Caco-2 (cell line): ENCODE measurements at regions of chr6 and their contacts with region 1.

Region 1: DNA sequence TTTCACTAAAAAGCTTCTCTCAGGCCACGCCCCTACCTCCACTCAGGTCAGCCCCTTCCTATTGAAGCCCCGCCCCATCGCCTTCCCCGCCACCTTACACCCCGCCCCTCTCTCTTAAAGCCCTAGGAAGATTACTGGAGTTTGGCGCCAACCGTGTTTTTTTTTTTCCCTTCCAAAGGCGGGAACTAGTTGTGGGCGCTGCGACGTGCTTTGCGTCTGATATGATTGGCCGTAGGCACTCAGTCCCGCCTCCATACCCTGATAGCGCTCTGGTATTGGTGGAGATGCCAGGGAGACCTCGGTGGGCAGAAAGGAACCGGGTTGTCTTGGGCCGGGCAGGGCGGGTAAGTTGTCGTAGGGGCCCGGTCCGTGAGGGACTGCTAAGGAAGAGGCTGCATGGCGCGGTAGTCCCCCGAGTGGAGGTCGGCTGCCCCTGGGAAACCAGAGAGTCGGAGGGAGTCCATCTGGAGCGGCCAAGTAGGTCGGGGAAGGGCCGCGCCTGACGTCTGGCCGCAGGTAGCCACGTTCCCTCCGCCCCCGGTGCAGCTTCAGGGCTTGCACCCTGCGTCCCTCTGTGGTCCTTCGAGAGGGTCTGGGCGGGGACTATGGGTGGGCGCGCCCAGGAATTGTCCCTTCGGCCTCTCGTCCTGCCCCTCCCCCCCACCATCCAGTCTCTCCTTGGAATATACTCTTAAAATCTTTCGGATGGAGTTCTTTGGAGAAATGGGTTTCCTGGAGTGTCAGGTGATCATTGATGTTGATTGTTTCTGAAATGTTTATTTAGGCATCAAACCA is at the start of gene CASP8AP2:
- DNase-seq: peak; percentile 94
- H3K4me3 ChIP-seq: peak within 1 kb of the TSS; percentile 64
- H3K4me3 Mint-ChIP-seq: peak within 1 kb of the TSS; percentile 99
- H3K27ac Mint-ChIP-seq: peak within 1 kb of the TSS; percentile 98
- H3K4me1 ChIP-seq: no peaks in the 10 kb centered on the region
- H3K4me1 Mint-ChIP-seq: no peaks in the 10 kb centered on the region
- H3K27me3 ChIP-seq: no peaks in the 10 kb centered on the region
- H3K27me3 Mint-ChIP-seq: no peaks in the 10 kb centered on the region
- CTCF ChIP-seq: no peak
- total RNA-seq, gene CASP8AP2: 19.3 and 23.3 TPM in 2 replicates

Region 2: DNA sequence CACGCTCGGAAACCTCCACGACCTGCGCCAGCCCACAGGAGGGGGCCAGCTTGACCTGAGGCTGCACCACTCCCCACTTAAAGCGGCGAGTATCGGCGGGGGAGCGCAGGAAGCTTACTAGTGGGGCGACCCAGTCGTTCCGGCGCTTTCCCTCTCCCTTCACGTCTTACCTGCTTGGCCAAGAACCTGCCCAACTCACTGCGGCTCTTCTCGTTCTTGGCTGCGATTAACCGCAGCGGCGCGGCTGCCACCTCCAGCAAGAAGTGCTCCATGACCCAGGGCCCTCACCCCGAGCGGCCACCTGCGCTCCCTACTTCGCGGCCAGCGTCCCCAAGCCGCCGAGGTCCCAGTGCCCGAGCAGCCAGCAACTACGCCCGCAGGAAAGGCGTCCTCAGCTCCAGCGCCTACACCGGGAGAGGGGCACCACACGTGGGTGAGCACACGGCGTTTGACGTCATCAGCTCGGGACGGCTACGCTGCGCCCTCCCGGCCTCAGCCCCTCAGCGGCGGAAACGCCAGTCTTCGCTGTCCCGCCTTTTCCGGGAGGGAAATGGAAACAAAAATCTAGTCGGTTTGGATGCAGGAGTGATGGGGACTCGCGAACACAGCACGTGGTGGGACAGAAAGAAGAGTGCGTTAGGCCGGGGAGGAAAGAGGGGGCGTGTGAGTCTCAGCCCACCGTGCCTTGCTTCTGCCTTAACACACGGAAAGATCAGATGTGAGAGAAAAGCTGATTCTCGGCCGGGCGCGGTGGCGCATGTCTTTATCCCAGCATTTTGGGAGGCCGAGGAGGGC is 10.3 kb before region 1 on chr6 and contains the start of gene MDN1:
- CTCF ChIA-PET with region 1: interaction called, 6 read pairs
- POLR2A ChIA-PET with region 1: interaction called, 32 read pairs
- intact Hi-C with region 1: loop called (anchors 1 kb)
- DNase-seq: peak; percentile 90 to 92
- H3K4me3 ChIP-seq: peak within 1 kb of the TSS; percentile 95
- H3K4me3 Mint-ChIP-seq: peak within 1 kb of the TSS; percentile 90
- H3K27ac Mint-ChIP-seq: peak within 1 kb of the TSS; percentile 98
- H3K4me1 ChIP-seq: peaks cover 3% of the 10 kb centered on the region
- H3K4me1 Mint-ChIP-seq: peaks cover 6% of the 10 kb centered on the region
- H3K27me3 ChIP-seq: no peaks in the 10 kb centered on the region
- H3K27me3 Mint-ChIP-seq: no peaks in the 10 kb centered on the region
- CTCF ChIP-seq: no peak
- total RNA-seq, gene MDN1: 49.0 and 59.3 TPM in 2 replicates

Region 3: DNA sequence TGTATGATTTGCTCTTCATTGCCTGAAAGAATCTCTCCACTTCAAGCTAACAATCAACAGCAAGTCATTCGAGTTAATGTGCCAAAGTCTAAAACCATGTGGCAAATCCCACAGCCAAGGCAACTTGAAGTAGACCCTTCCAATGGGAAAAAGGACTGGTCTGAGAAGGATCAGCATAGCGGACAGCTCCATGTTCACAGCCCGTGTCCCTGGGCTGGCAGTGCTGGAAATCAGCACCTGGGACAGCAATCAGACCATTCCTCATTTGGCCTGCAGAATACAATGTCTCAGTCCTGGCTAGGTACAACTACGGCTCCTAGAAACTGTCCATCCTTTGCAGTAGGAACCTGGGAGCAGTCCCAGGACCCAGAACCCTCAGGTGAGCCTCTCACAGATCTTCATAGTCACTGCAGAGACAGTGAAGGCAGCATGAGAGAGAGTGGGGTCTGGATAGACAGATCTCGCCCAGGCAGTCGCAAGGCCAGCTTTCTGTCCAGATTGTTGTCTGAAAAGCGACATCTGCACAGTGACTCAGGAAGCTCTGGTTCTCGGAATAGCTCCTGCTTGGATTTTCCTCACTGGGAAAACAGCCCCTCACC is 65.6 kb after region 1 on chr6:
- CTCF ChIA-PET with region 1: no interaction called
- POLR2A ChIA-PET with region 1: no interaction called
- intact Hi-C with region 1: loop called (anchors 1 kb)
- DNase-seq: peak; percentile 61 to 76
- H3K4me3 ChIP-seq: no peak overlapping the region
- H3K4me3 Mint-ChIP-seq: no peak overlapping the region
- H3K27ac Mint-ChIP-seq: no peak overlapping the region
- H3K4me1 ChIP-seq: peaks cover 9% of the 10 kb centered on the region
- H3K4me1 Mint-ChIP-seq: peaks cover 14% of the 10 kb centered on the region
- H3K27me3 ChIP-seq: no peaks in the 10 kb centered on the region; the same call in 1 of the 2 replicates
- H3K27me3 Mint-ChIP-seq: peaks cover 12% of the 10 kb centered on the region
- CTCF ChIP-seq: no peak